Body of pancreas (tissue), 4 donors: ENCODE measurements at regions of chr1 and their contacts with region 1.

Region 1: DNA sequence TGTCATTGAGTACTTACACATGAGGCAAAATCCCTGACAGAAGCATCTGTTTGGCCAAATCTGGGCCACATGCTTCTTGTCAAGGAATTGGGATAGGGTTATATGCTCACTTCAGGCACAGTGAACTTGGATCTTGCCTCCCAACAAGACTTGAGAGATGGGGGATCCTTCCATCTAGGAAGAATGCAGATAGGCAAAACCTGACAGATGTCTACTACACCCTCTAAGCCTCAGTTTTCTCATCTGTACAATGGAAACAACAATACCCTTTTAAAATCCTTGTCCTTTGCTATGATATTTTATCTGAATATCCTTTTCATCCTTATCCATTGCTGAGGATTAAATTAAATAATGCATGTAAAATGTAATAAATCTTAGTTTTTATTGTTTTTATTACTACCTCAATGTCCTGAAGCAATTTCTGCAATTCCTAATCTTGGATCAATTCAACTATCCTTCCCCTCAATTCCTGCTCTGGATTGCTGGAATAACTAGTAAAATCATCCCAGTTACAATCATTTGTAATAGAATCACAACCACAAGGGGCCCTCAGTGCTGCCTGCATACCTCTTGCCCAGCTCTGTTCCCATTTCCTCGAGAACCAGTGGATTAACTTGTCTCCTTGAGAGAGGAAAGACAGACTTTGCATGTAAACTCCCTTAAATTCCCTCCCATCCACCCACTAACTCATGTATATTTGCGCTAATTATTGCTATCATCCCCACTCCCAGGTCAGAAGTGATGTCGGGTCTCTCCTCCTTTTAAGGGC is 8.1 kb upstream of the XPR1 start:
- DNase-seq: peak in 2 of 4 donors; percentile 28 to 55
- ATAC-seq: peak; percentile 65
- H3K4me3 ChIP-seq: no peak overlapping the region
- H3K27ac ChIP-seq: no peak overlapping the region
- H3K4me1 ChIP-seq: no peaks in the 10 kb centered on the region
- H3K27me3 ChIP-seq: no peaks in the 10 kb centered on the region
- CTCF ChIP-seq: peak in 4 of 7 experiments; percentile 18 to 53 (median 29)
- POLR2A ChIP-seq: no peak

Region 2: GRCh38 chr1:180533266-180533987 is 90.3 kb before region 1 on chr1:
- intact Hi-C with region 1: loop called (anchors 10 kb)
- DNase-seq: peak; percentile 75 to 84 (median 78)
- ATAC-seq: peak; percentile 81
- H3K4me3 ChIP-seq: no peak overlapping the region
- H3K27ac ChIP-seq: no peak overlapping the region
- H3K4me1 ChIP-seq: peaks cover 19% of the 10 kb centered on the region
- H3K27me3 ChIP-seq: no peaks in the 10 kb centered on the region
- CTCF ChIP-seq: peak; percentile 69 to 94 (median 86)
- POLR2A ChIP-seq: no peak